ENCODE measurements at regions of chr20 and their contacts with region 1.

Region 1: DNA sequence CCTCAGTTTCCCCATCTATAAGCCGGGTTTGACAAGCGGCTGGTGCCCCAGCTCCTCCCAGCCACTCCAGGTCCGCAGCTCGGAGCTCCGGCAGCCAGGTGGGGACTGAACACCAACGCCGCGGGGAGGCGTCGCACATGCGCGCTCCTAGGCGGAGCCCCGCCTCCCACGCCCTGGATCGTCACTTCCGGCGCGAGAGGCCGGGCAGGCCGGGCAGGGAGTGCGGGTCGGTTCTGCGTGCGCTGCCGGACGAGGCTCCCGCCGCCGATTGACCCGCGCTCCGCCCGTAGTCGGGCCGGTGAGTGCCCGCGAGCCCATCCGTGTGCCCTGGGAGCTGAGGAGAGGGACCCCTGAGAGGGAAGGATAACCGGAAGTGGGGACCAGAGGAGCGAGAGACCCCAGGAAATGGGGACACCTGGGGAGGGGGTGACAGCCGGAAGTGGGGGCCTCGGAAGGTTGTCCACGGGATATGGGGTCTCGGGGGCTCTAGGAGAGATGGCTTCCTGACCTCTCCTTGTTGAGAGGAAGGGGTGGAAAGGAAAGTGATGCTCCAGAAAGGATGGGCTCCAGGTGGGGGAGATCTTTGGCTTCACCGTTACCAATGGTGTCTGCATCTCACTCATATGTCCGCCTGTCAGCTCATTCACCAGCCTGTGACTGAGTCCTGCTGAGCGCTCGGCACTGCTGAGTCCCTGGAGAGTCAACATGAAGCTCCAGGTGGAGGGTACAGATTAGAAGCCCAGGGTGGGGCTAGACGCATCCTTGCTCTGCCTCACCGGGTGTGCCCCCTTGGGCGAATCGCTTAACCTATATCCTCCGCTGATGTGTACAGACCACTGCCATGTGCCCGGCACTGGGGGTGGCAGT is at the start of gene TTPAL:
- DNase-seq: peak; percentile 88
- H3K4me3 ChIP-seq: peak within 1 kb of the TSS; percentile 73 to 94 (median 78)
- H3K27ac ChIP-seq: peak within 1 kb of the TSS; percentile 86
- H3K4me1 ChIP-seq: peaks cover 18% of the 10 kb centered on the region
- H3K27me3 ChIP-seq: no peaks in the 10 kb centered on the region
- CTCF ChIP-seq: peak in 1 of 2 donors; percentile 56
- total RNA-seq, gene TTPAL: 59.0 TPM

Region 2: DNA sequence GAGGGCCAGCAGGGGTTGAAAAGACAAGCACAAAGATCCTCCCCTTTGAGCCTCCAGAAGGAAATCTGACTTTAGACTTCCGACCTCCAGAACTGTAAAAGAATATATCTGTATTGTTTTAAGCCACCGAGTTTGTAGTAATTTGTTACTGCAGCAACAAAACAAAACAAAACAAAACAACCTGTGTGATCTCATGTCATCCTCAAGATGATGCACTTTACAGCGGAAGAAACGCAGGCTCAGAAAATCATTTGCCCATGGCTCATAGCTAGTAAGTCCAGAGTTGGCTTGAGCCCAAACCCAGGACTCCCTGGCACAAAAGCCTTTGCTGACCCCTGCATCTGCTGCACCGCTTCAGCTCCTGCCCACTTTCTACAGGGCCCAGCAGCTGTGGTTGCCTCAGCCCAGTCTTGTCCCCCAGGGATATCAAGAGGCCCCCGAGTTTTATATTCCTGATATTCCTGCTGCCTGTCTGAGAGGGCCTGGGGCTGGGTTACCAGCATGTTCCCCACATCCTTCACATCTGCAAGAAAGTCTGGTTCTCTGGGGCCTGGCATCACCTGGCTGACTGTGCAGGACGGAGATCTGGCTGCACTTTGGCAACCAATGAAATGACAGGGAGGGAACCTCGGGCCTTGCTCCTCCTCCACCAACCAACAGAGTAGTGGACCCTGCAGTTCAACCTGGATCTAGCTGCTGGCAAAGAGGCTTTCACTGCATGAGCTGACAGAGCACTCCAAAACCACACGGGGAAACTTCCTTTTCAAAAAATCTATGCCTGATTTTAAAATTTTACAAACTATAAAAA is 345.8 kb before region 1 on chr20:
- CTCF ChIA-PET with region 1: no interaction called
- dilution Hi-C with region 1: no loop called
- in situ Hi-C with region 1: no loop called
- intact Hi-C with region 1: loop called (anchors 10 kb)
- DNase-seq: no peak
- H3K4me3 ChIP-seq: no peak overlapping the region
- H3K27ac ChIP-seq: no peak overlapping the region
- H3K4me1 ChIP-seq: no peaks in the 10 kb centered on the region
- H3K27me3 ChIP-seq: no peaks in the 10 kb centered on the region
- CTCF ChIP-seq: no peak

Region 3: GRCh38 chr20:44217342-44218092 is 258.4 kb before region 1 on chr20:
- CTCF ChIA-PET with region 1: no interaction called
- dilution Hi-C with region 1: no loop called
- in situ Hi-C with region 1: no loop called
- intact Hi-C with region 1: loop called (anchors 1 kb)
- DNase-seq: peak; percentile 52
- H3K4me3 ChIP-seq: no peak overlapping the region
- H3K27ac ChIP-seq: no peak overlapping the region
- H3K4me1 ChIP-seq: peaks cover 7% of the 10 kb centered on the region
- H3K27me3 ChIP-seq: no peaks in the 10 kb centered on the region
- CTCF ChIP-seq: peak; percentile 96 to 99

Region 4: DNA sequence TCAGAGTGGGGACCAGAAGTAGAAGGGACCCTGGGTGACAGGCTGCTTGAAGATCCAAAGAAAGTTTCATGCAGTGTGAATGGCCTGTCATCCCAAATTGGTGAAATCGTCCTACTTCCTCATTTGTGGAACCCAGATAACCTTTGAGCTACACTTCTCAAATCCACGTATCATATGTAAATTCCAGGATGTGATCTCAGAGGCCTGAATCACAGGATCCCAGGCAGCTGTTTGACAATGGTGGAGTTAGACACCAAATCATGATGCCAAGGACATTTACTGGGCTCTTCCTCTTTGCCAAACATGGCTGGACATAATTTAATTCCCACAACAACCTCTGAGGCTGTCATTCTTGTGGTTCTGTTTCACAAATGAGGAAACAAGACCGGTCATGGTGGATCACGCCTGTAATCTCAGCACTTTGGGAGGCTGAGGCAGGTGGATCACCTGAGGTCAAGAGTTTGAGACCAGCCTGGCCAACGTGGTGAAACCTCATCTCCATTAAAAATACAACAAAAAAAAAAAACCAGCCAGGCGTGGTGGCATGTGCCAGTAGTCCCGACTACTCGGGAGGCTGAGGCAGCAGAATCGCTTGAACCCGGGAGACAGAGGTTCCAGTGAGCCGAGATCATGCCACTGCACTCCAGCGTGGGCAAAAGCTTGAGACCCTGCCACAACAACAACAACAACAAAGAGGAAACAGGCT is 40.1 kb before region 1 on chr20:
- CTCF ChIA-PET with region 1: no interaction called
- dilution Hi-C with region 1: loop called (anchors 5 kb)
- in situ Hi-C with region 1: no loop called
- intact Hi-C with region 1: no loop called
- DNase-seq: no peak
- H3K4me3 ChIP-seq: no peak overlapping the region
- H3K27ac ChIP-seq: no peak overlapping the region
- H3K4me1 ChIP-seq: no peaks in the 10 kb centered on the region
- H3K27me3 ChIP-seq: no peaks in the 10 kb centered on the region
- CTCF ChIP-seq: no peak

Region 5: GRCh38 chr20:44495802-44496481 is 20.0 kb after region 1 on chr20:
- CTCF ChIA-PET with region 1: no interaction called
- dilution Hi-C with region 1: no loop called
- in situ Hi-C with region 1: no loop called
- intact Hi-C with region 1: loop called (anchors 1 kb)
- DNase-seq: peak; percentile 99
- H3K4me3 ChIP-seq: no peak overlapping the region
- H3K27ac ChIP-seq: peak overlapping the region; percentile 100
- H3K4me1 ChIP-seq: peaks cover 41% of the 10 kb centered on the region
- H3K27me3 ChIP-seq: no peaks in the 10 kb centered on the region
- CTCF ChIP-seq: no peak

Region 6: GRCh38 chr20:44521484-44522481 is 45.9 kb after region 1 on chr20 and contains the start of gene SERINC3:
- CTCF ChIA-PET with region 1: no interaction called
- dilution Hi-C with region 1: no loop called
- in situ Hi-C with region 1: no loop called
- intact Hi-C with region 1: loop called (anchors 2 kb)
- DNase-seq: peak; percentile 96
- H3K4me3 ChIP-seq: peak within 1 kb of the TSS; percentile 95 to 99 (median 99)
- H3K27ac ChIP-seq: peak within 1 kb of the TSS; percentile 99
- H3K4me1 ChIP-seq: peaks cover 32% of the 10 kb centered on the region
- H3K27me3 ChIP-seq: no peaks in the 10 kb centered on the region
- CTCF ChIP-seq: peak in 1 of 2 donors; percentile 33
- total RNA-seq, gene SERINC3: 101 to 153 TPM